ENCODE measurements at regions of chr16 and their contacts with region 1.

Region 1: GRCh38 chr16:55465077-55465896 is 13.7 kb upstream of the MMP2 start:
- DNase-seq: peak; percentile 84 to 96 (median 90)
- ATAC-seq: peak; percentile 97
- H3K4me3 ChIP-seq: no peak overlapping the region
- H3K4me1 ChIP-seq: no peaks in the 10 kb centered on the region
- CTCF ChIP-seq: peak; percentile 95

Region 2: DNA sequence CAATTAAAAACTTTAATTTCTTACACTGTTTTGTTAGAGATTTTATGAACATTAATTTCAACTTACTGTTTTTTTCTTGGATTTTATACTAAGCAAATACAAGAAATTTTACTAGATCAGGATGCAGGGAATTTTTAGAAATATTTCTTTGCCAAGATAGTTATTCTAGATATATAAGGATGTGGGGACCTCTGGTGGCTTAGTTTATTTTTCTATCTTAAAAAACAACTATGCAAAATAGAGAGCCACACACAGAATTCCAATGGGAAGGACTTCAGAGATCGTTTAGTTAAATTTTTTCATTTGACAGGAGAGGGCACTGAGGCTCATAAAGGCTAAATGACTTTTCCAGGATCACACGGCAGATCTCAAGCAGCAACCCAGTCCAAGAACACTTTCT is 78.2 kb after region 1 on chr16:
- intact Hi-C with region 1: loop called (anchors 2 to 10 kb)
- DNase-seq: no peak
- ATAC-seq: no peak
- H3K4me3 ChIP-seq: no peak overlapping the region
- H3K4me1 ChIP-seq: no peaks in the 10 kb centered on the region
- CTCF ChIP-seq: no peak

Region 3: GRCh38 chr16:55701442-55702319 is 236.4 kb after region 1 on chr16:
- intact Hi-C with region 1: loop called (anchors 5 kb)
- DNase-seq: peak in 2 of 3 donors; percentile 61 to 66
- ATAC-seq: peak; percentile 61
- H3K4me3 ChIP-seq: no peak overlapping the region
- H3K4me1 ChIP-seq: no peaks in the 10 kb centered on the region
- CTCF ChIP-seq: no peak

Region 4: GRCh38 chr16:55842369-55843104 is 377.2 kb after region 1 on chr16:
- intact Hi-C with region 1: loop called (anchors 10 kb)
- DNase-seq: peak in 1 of 3 donors; percentile 39
- ATAC-seq: peak; percentile 45
- H3K4me3 ChIP-seq: no peak overlapping the region
- H3K4me1 ChIP-seq: no peaks in the 10 kb centered on the region
- CTCF ChIP-seq: peak; percentile 36

Measured in mucosa of descending colon (tissue), 3 donors.